Heart right ventricle (tissue), 16 donors: ENCODE measurements at regions of chr17 and their contacts with region 1.

Region 1: GRCh38 chr17:57810721-57811637 is 38.9 kb downstream of the MRPS23 start:
- DNase-seq: peak; percentile 69 to 70
- ATAC-seq: peak; percentile 64 to 85 (median 72)
- H3K4me3 ChIP-seq: peak overlapping the region in 8 of 10 donors; percentile 1 to 35 (median 30)
- H3K27ac ChIP-seq: peak overlapping the region; percentile 26 to 82 (median 66)
- H3K4me1 ChIP-seq: peaks cover 12 to 37% (median 22%) of the 10 kb centered on the region in 9 donors
- H3K27me3 ChIP-seq: peaks cover 0 to 24% (median 0%) of the 10 kb centered on the region in 7 donors
- CTCF ChIP-seq: no peak

Region 2: DNA sequence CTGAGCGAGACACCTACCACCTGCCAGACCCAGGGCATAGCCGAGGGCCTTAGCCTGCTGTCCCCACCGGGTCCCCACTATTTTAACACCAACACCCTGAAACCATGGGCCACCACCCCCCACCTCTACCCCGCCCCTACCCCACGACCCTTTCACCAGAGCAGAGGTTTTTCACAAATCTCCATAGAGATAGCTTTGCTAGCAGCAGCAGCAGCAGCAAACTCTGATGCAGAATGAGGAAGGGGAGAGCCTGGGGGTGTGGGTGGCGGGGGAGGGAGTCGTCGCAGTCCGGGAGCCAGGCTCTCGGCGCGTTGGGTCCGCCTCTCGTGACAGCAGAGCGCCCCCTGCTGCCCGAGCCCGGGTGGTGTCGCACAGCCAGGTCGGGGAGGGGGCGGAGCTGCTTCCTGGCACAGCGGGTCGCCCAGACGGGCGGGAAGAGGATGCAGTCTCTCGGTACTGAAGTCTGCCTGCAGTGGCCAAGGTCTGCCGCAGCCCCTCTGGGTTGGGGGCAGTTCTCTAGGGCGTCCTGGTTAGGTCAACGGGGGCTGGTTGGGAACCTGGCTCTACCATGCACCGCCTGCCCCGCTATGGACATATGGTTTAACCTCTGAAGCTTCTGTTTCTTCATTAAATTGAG is 27.8 kb before region 1 on chr17:
- intact Hi-C with region 1: loop called in 1 of 10 experiments (anchors 1 kb)
- DNase-seq: peak; percentile 61 to 78
- ATAC-seq: peak; percentile 66 to 76 (median 72)
- H3K4me3 ChIP-seq: peak overlapping the region in 5 of 10 donors; percentile 8 to 29 (median 12)
- H3K27ac ChIP-seq: peak overlapping the region in 4 of 10 donors; percentile 46 to 67 (median 56)
- H3K4me1 ChIP-seq: peaks cover 6 to 47% (median 24%) of the 10 kb centered on the region in 9 donors
- H3K27me3 ChIP-seq: peaks cover 0 to 7% (median 0%) of the 10 kb centered on the region in 7 donors
- CTCF ChIP-seq: peak; percentile 44 to 92 (median 86)